Activated CD4-positive, alpha-beta memory T cell treated with anti-CD3 and anti-CD28 coated beads for 36 hours (primary cell): ENCODE measurements at regions of chr11 and their contacts with region 1.

Region 1: GRCh38 chr11:111601979-111602864 is at the start of gene SIK2:
- DNase-seq: peak; percentile 93
- H3K4me3 Mint-ChIP-seq: peak within 1 kb of the TSS; percentile 91
- H3K27ac Mint-ChIP-seq: peak within 1 kb of the TSS; percentile 77
- H3K4me1 Mint-ChIP-seq: peaks cover 30% of the 10 kb centered on the region
- H3K27me3 Mint-ChIP-seq: no peaks in the 10 kb centered on the region
- total RNA-seq, gene SIK2: 4.6 to 6.2 TPM

Region 2: GRCh38 chr11:111422494-111423249 is 179.6 kb before region 1 on chr11:
- CTCF ChIA-PET with region 1: no interaction called
- POLR2A ChIA-PET with region 1: no interaction called
- intact Hi-C with region 1: no loop called
- DNase-seq: peak; percentile 73
- H3K4me3 Mint-ChIP-seq: no peak overlapping the region
- H3K27ac Mint-ChIP-seq: no peak overlapping the region
- H3K4me1 Mint-ChIP-seq: peaks cover 4% of the 10 kb centered on the region
- H3K27me3 Mint-ChIP-seq: no peaks in the 10 kb centered on the region

Region 3: DNA sequence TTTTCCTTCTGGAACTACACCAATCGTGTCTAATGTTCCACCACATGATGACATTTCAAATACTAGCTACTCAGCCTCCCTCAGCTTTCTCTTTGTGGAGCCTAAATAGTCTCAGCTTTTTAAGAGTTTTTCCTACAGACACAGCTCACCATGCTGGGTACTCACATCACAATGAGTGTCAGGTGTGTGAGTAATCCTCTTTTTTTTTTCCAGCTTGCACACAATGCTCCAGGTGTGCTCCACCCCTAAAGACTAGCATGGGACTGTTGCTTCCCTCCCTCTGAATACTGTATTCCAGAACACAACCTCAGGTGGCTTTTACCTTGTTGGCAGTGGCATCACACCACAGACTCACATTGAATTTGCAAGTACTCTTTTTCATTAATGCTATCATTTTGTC is 101.7 kb before region 1 on chr11:
- CTCF ChIA-PET with region 1: no interaction called
- POLR2A ChIA-PET with region 1: no interaction called
- intact Hi-C with region 1: no loop called
- DNase-seq: no peak
- H3K4me3 Mint-ChIP-seq: no peak overlapping the region
- H3K27ac Mint-ChIP-seq: no peak overlapping the region
- H3K4me1 Mint-ChIP-seq: no peaks in the 10 kb centered on the region
- H3K27me3 Mint-ChIP-seq: peaks cover 32% of the 10 kb centered on the region

Region 4: DNA sequence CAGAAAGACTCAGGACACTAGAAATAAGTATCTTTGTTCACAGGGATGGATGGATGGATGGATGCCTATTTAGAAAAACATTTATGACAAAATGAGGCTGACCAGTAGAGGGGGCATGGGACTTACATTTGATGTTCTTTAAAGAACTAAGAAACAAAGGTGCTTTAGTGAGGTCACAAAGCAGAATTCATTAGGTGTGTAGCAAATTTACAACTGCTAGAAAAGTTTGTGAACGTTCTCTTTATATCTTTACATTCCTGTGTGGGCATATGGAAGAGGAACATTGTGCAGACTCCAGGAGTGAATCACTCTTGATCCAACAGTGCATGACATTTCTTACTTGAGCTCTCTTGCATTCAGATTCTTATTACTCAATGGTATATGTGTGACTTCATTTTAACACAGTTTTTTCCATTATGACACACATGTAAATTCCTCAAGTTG is 15.8 kb before region 1 on chr11:
- CTCF ChIA-PET with region 1: interaction called, 20 read pairs
- POLR2A ChIA-PET with region 1: no interaction called
- intact Hi-C with region 1: no loop called
- DNase-seq: peak; percentile 35
- H3K4me3 Mint-ChIP-seq: no peak overlapping the region
- H3K27ac Mint-ChIP-seq: no peak overlapping the region
- H3K4me1 Mint-ChIP-seq: no peaks in the 10 kb centered on the region
- H3K27me3 Mint-ChIP-seq: no peaks in the 10 kb centered on the region

Region 5: DNA sequence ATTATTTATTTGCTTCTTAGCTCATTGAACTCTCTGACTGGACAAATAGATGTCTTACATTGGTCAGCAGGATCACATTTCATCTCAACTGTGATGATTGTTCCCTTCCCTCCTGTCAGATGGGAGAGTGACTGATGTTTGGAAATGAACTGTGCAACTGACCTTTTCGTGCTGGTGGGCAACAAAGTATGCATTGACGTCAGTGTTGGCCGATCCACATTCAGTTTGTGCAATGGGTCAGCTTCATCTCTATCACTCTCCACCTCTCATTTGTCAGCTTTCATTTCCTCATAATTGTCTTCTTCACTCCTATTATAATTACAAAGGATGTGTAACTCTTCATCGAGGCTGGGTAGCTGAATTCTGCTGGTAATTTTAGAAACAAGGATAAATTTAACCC is 92.6 kb after region 1 on chr11:
- CTCF ChIA-PET with region 1: interaction called, 6 read pairs
- POLR2A ChIA-PET with region 1: no interaction called
- intact Hi-C with region 1: loop called (anchors 2 kb)
- DNase-seq: no peak
- H3K4me3 Mint-ChIP-seq: no peak overlapping the region
- H3K27ac Mint-ChIP-seq: no peak overlapping the region
- H3K4me1 Mint-ChIP-seq: peaks cover 12% of the 10 kb centered on the region
- H3K27me3 Mint-ChIP-seq: no peaks in the 10 kb centered on the region

Region 6: DNA sequence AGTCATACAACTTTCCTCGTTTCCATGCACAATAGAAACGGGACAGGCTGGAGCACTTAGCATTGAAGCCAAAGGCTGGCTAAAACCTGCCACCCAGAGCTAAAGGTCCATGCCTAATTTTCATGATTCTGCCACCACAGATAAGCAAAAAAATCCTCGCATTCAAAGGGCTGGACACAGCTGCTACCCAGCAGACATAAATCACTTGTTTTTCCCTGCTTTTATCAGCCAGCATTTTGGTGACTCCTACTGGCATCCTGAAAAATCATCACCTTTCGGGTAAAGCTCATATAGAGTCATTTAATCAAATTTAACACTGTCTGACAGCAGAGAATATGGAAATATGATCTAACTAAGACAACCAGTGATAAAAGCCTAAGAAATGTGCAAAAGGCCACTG is 231.3 kb after region 1 on chr11:
- CTCF ChIA-PET with region 1: interaction called, 3 read pairs
- POLR2A ChIA-PET with region 1: no interaction called
- intact Hi-C with region 1: loop called (anchors 5 kb)
- DNase-seq: no peak
- H3K4me3 Mint-ChIP-seq: no peak overlapping the region
- H3K27ac Mint-ChIP-seq: no peak overlapping the region
- H3K4me1 Mint-ChIP-seq: peaks cover 24% of the 10 kb centered on the region
- H3K27me3 Mint-ChIP-seq: no peaks in the 10 kb centered on the region

Region 7: GRCh38 chr11:111878849-111879636 is 276.8 kb after region 1 on chr11 and contains the starts of genes CFAP68 and FDXACB1:
- CTCF ChIA-PET with region 1: no interaction called
- POLR2A ChIA-PET with region 1: no interaction called
- intact Hi-C with region 1: loop called (anchors 1 kb)
- DNase-seq: peak; percentile 96
- H3K4me3 Mint-ChIP-seq: peak within 1 kb of the TSS; percentile 82
- H3K27ac Mint-ChIP-seq: peak within 1 kb of the TSS; percentile 95
- H3K4me1 Mint-ChIP-seq: peaks cover 21% of the 10 kb centered on the region
- H3K27me3 Mint-ChIP-seq: no peaks in the 10 kb centered on the region
- total RNA-seq, gene CFAP68: 29.9 to 33.6 TPM
- total RNA-seq, gene FDXACB1: 5.2 to 5.6 TPM

Region 8: DNA sequence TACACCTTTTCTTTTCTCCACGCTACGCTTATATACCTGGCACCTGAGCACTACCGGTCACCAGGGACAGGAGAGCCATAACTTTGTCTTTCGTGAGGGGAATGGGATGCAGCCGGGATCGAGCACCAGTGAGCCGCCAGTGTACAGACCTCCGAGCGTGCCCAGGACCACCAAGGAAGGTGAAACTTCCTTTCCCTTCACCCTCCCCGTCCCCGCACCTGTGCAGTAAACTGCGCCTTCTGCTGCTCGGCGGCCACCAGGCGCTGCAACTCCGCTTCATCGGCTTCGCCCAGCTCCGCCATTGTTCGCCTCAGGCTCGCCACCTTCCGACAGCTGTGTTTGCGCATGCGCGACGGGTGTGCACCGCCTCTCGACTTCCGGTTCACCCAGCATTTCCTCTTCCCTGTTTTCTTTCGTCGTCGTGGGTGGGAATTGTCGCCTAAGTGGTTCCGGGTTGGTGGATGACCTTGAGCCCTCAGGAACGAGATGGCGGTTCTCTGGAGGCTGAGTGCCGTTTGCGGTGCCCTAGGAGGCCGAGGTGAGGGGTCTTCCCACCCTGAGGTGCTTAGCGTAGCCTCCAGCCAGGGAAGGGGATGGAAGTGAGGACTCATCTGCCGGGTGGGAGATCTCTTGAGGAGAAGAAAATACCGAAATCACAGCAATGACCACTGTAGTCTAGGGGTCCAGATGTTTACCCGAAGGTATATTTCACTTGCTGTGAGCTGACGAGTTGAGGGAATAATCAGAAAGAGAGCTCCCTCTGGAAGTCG is 484.4 kb after region 1 on chr11 and contains the starts of genes SDHD and TIMM8B:
- CTCF ChIA-PET with region 1: no interaction called
- POLR2A ChIA-PET with region 1: no interaction called
- intact Hi-C with region 1: loop called (anchors 2 kb)
- DNase-seq: peak; percentile 97
- H3K4me3 Mint-ChIP-seq: peak within 1 kb of the TSS; percentile 92
- H3K27ac Mint-ChIP-seq: peak within 1 kb of the TSS; percentile 92
- H3K4me1 Mint-ChIP-seq: peaks cover 63% of the 10 kb centered on the region
- H3K27me3 Mint-ChIP-seq: peaks cover 2% of the 10 kb centered on the region
- total RNA-seq, gene SDHD: 72.7 to 91.6 TPM
- total RNA-seq, gene TIMM8B: 36.5 to 38.4 TPM